ENCODE measurements at regions of chr3 and their contacts with region 1.

Region 1: DNA sequence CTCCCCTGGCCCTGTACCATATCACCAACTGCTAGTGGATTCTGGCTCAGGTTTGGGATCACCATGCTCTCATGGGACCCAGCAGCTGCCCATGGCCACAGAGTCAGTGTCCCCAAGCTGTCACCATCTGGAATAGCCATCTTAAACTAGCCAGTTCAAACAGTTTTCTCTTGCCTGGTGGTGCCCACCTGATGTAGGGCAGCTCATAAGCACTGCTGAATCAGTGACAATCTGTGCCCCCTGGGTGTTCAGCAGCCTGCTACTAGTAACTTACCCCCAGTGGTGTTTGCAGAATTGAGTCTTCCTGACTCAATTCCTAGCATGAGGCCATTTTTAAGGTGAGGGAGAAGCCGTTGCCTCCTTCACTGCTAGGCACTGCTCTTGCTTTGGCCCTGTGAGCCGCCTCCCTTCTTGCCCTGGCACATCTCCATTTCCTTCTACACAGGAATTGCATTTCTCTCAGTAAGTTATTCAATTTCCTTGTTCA is 7.9 kb downstream of the RPSA start:
- DNase-seq: peak in 1 of 2 experiments; percentile 61
- H3K4me3 ChIP-seq: no peak overlapping the region
- H3K27ac ChIP-seq: peak overlapping the region; percentile 32; the same call in 1 of the 2 replicates
- H3K4me1 ChIP-seq: peaks cover 0 to 3% (median 0%) of the 10 kb centered on the region in 4 experiments; a peak in 3 of 7 replicates
- H3K27me3 ChIP-seq: no peaks in the 10 kb centered on the region
- CTCF ChIP-seq: no peak
- EP300 ChIP-seq: no peak
- POLR2A ChIP-seq: peak; percentile 86 to 95
- RAD21 ChIP-seq: no peak

Region 2: DNA sequence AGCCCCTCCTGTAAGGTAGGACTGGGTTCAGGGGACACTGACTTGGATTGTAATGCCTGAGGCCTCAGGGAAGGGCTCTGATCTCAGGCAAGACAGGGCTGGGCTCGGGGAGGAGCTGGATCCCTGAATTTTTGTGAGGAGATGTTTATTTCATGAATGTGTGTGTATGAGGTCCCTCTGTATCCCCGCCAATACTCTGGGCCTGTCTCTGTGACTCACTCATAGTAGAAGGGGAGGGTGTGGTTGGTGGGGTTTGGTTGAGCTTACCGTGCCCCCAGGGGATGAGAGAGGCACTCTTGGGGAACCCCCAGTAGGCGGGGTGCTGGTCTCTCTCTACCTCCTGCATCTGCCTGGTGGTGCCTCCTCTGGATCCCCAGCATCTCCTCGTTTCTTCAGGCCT is 20.1 kb after region 1 on chr3:
- CTCF ChIA-PET with region 1: interaction called, 8 read pairs
- POLR2A ChIA-PET with region 1: interaction called, 141 read pairs
- DNase-seq: no peak
- H3K4me3 ChIP-seq: no peak overlapping the region
- H3K27ac ChIP-seq: no peak overlapping the region; the same call in 1 of the 2 replicates
- H3K4me1 ChIP-seq: no peaks in the 10 kb centered on the region
- H3K27me3 ChIP-seq: no peaks in the 10 kb centered on the region
- CTCF ChIP-seq: no peak
- EP300 ChIP-seq: no peak
- POLR2A ChIP-seq: no peak
- RAD21 ChIP-seq: no peak

Measured in H1 (cell line).